Gastrocnemius medialis (tissue), 4 donors: ENCODE measurements at regions of chr5 and their contacts with region 1.

Region 1: DNA sequence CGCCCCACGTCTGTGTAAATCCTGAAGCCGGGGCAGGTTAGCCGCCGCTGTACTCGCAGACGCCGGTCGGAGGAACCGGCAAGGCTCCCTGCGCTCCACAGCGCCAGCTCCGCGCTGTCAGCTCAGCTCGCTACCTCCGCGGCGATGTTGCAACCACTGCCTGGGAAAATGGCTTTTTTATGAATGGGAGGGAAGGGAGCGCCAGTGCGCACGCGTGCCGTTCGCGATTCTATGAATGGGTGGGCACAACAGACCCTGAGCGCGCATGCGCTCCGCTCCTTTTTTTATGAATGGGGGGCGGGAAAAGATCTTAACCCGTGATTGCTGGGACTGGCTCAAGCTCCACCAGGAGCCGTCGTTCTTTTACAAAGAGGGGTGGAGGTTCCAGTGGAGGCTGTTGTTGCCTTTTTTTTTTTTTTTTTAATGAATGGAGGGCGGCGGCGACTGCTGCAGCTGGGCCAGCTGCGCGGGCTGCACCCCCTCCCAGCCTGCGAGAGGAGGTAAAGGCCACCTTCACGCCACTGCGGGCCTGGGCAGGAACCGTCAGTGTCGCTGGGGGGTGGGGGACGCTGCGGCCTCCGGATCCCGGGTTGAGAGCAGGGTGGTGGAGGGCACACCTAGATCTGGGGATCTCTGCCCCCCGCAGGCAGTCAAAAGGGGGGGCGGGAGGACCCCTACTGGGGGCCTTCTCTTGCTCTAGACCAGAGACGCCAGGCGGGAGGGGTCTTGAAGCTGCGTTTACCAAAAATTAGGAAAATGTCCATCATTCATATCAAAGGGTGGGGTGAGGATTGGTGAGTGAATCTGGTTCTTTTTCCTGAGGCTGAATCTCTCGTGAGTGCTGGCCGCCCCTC is at the start of gene SPRY4:
- DNase-seq: peak; percentile 71 to 79
- ATAC-seq: peak; percentile 72 to 74
- H3K4me3 ChIP-seq: peak within 1 kb of the TSS; percentile 64 to 75 (median 70)
- H3K27ac ChIP-seq: peak within 1 kb of the TSS; percentile 70 to 78 (median 77)
- H3K4me1 ChIP-seq: peaks cover 23 to 33% of the 10 kb centered on the region in 2 donors
- H3K27me3 ChIP-seq: peaks cover 19 to 32% (median 27%) of the 10 kb centered on the region in 3 donors
- CTCF ChIP-seq: peak in 1 of 5 experiments; percentile 2
- POLR2A ChIP-seq: peak; percentile 63 to 82
- total RNA-seq, gene SPRY4: 4.3 to 6.9 (median 5.9) TPM

Region 2: DNA sequence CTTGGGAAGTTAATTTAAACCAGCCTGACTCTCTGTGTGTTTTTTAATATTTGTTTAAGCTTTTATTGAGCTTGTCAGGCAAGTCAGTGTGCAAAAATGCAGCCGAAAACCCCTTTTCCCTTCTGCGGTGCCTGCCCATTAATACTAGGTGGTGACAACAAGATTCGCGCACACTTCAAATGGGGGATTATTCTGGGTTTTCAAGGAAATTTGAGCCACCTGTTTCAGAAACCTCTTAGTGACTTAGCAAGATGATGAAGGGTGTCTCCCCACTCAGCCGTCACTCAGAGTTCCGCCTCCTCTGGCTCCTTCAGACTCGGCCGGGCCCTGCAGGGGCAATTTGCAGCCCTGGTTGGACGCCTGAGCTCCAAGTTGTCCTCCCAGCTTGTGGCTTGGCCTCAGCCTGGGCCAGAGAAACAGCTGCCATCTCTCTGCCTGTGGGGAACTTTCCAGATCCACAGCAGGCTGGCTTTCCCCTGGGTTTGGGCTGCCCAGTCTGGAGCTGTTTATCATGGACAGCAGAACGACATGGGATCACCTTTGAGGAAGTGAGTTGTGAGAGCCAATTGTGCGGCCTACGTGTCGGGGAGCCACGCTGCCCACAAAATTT is 76.1 kb before region 1 on chr5:
- in situ Hi-C with region 1: no loop called
- intact Hi-C with region 1: loop called (anchors 2 kb)
- DNase-seq: peak; percentile 11 to 35
- ATAC-seq: peak; percentile 47 to 65
- H3K4me3 ChIP-seq: no peak overlapping the region
- H3K27ac ChIP-seq: no peak overlapping the region
- H3K4me1 ChIP-seq: no peaks in the 10 kb centered on the region
- H3K27me3 ChIP-seq: no peaks in the 10 kb centered on the region
- CTCF ChIP-seq: no peak
- POLR2A ChIP-seq: no peak

Region 3: DNA sequence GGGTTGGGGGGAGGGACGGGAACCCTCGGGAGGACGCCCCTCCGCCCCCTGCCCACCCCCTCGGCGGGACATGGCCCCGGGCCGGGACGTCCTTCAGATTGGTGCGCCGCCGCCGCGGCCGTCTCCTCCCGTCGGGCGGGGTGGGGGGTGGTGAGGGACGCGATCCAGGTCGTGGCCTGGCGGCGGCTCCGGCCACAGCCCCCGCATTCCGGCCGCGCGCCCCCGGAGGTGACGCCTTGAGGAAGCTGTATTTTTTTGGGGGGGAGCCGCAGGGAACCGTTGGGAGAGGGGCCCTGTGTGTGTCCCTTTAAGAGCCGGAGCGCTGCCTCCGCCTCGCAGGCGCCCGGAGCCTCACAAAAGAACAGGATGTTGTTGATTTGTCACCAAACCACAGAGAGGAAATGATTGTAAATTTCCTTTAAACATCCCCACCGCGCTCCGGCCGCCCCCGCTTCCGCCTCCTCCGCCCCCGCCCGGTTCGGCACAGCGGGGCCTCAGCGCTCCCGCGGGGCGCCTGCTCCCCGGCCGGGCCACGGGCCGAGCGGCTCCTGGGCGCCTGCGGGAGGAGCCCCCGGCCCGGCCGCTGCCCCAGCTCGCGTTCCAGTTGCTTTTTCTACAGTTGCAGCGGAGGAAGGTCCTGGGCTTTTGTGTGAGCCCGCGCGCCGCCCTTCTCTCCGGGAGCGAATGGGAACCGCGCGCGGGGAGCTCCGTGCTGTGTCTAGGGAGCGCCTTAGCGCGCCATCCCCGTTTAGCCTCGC is 31.8 kb after region 1 on chr5:
- in situ Hi-C with region 1: no loop called
- intact Hi-C with region 1: loop called (anchors 2 kb)
- DNase-seq: peak; percentile 49 to 70
- ATAC-seq: peak; percentile 80 to 87
- H3K4me3 ChIP-seq: peak overlapping the region; percentile 54 to 74 (median 62)
- H3K27ac ChIP-seq: peak overlapping the region; percentile 75 to 86 (median 78)
- H3K4me1 ChIP-seq: peaks cover 10 to 16% of the 10 kb centered on the region in 2 donors
- H3K27me3 ChIP-seq: peaks cover 4 to 25% (median 23%) of the 10 kb centered on the region in 3 donors
- CTCF ChIP-seq: no peak
- POLR2A ChIP-seq: peak; percentile 45 to 67

Region 4: GRCh38 chr5:142432369-142432863 is 107.3 kb after region 1 on chr5:
- in situ Hi-C with region 1: no loop called
- intact Hi-C with region 1: loop called (anchors 10 kb)
- DNase-seq: no peak
- ATAC-seq: no peak
- H3K4me3 ChIP-seq: no peak overlapping the region
- H3K27ac ChIP-seq: no peak overlapping the region
- H3K4me1 ChIP-seq: no peaks in the 10 kb centered on the region
- H3K27me3 ChIP-seq: no peaks in the 10 kb centered on the region
- CTCF ChIP-seq: no peak
- POLR2A ChIP-seq: no peak